Activated CD8-positive, alpha-beta memory T cell treated with anti-CD3 and anti-CD28 coated beads, Interleukin-2, amount 10 ng/mL, durations not matched to agents 7 days and 5 days (primary cell): ENCODE measurements at regions of chr5 and their contacts with region 1.

Region 1: DNA sequence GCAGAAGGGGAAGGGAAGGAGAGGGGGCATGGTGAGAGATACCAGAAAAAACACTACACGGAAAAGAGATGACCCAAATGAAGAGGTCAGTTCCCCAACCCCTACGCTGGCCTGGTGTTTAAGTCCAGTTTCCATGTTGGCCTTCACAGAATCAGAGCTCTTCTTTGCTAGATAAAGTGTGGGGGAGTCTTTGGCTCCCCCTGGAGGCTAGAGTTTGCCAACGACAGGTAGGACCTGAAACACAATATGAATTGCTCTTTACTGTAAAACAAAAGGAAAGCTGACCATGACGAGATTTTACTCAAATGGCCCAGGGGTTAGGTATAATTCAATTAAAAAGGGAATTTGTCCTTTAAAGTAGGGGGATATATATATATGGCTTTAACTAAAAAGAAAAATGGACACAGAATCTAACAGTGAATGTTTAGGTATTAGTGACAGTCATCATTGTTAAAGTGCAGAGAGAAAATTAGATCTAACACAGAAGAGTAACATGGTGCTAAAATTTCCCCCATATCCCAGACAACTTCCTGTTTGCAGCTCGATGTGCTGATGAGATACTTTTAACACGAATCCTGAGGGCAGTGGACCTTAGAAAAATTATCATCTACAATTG is 92.0 kb downstream of the SV2C start:
- DNase-seq: peak; percentile 76
- ATAC-seq: peak; percentile 52
- H3K4me3 Mint-ChIP-seq: peak overlapping the region; percentile 66
- H3K27ac Mint-ChIP-seq: peak overlapping the region; percentile 97
- H3K4me1 Mint-ChIP-seq: peaks cover 42% of the 10 kb centered on the region
- H3K27me3 Mint-ChIP-seq: no peaks in the 10 kb centered on the region

Region 2: GRCh38 chr5:75236322-75237316 is 938.5 kb before region 1 on chr5 and contains the start of gene ANKRD31:
- CTCF ChIA-PET with region 1: interaction called, 13 read pairs
- DNase-seq: peak; percentile 88
- ATAC-seq: peak; percentile 99
- H3K4me3 Mint-ChIP-seq: peak within 1 kb of the TSS; percentile 86
- H3K27ac Mint-ChIP-seq: peak within 1 kb of the TSS; percentile 94
- H3K4me1 Mint-ChIP-seq: peaks cover 19% of the 10 kb centered on the region
- H3K27me3 Mint-ChIP-seq: no peaks in the 10 kb centered on the region
- total RNA-seq, gene ANKRD31: 0.26 to 0.28 TPM

Region 3: DNA sequence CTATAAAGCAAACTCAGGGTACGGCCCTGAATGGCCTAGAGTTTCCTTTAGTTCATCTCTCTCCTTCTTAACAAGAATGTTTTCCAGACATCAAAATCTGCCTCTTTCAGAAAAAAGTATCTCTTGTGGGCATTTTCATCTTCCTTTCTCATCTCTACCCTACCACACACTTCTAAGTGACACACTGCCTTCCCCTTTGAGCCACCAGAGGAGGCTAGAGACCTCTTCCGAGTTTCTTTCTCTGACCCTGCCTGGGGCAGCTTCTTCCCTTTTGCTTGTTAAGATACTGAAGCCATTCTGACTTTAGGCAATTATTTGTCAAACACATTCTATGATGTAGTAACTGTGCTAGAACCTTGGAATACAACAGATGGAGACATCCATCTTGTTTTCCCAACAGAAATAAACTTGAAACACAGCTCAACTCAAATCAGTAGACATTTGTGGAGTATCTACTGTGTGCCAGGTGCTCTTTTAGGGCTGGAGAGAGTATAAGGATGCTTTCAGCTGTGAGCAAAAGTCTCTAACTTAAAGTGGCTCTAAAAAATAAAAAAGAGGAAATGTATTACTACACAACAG is 100.6 kb before region 1 on chr5:
- CTCF ChIA-PET with region 1: interaction called, 33 read pairs
- DNase-seq: peak; percentile 57
- ATAC-seq: peak; percentile 61
- H3K4me3 Mint-ChIP-seq: no peak overlapping the region
- H3K27ac Mint-ChIP-seq: no peak overlapping the region
- H3K4me1 Mint-ChIP-seq: peaks cover 7% of the 10 kb centered on the region
- H3K27me3 Mint-ChIP-seq: peaks cover 76% of the 10 kb centered on the region

Region 4: DNA sequence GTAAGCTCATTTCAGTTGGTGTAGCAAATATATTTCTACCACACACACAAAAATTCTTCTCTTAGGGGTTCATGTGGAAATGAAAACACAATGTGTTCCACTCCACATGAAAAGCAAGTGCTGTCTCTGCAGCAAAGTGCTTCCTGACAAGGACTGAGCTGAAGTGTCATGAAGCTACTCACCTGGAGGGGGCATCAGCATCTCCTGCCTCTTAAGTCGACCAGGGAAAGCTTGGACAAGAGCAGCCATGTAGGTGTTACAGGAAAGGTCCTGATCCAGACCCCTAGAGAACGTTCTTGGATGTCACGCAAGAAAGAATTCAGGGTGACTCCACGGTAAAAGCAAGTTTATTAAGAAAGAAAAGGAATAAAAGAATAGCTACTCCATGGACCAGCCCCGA is 29.2 kb before region 1 on chr5:
- CTCF ChIA-PET with region 1: interaction called, 17 read pairs
- DNase-seq: peak; percentile 45
- ATAC-seq: no peak
- H3K4me3 Mint-ChIP-seq: no peak overlapping the region
- H3K27ac Mint-ChIP-seq: no peak overlapping the region
- H3K4me1 Mint-ChIP-seq: no peaks in the 10 kb centered on the region
- H3K27me3 Mint-ChIP-seq: peaks cover 2% of the 10 kb centered on the region

Region 5: GRCh38 chr5:76187386-76187785 is 12.2 kb after region 1 on chr5:
- CTCF ChIA-PET with region 1: interaction called, 11 read pairs
- DNase-seq: no peak
- ATAC-seq: no peak
- H3K4me3 Mint-ChIP-seq: no peak overlapping the region
- H3K27ac Mint-ChIP-seq: no peak overlapping the region
- H3K4me1 Mint-ChIP-seq: peaks cover 6% of the 10 kb centered on the region
- H3K27me3 Mint-ChIP-seq: no peaks in the 10 kb centered on the region

Region 6: GRCh38 chr5:76209297-76209696 is 34.1 kb after region 1 on chr5:
- CTCF ChIA-PET with region 1: interaction called, 11 read pairs
- DNase-seq: no peak
- ATAC-seq: no peak
- H3K4me3 Mint-ChIP-seq: no peak overlapping the region
- H3K27ac Mint-ChIP-seq: no peak overlapping the region
- H3K4me1 Mint-ChIP-seq: no peaks in the 10 kb centered on the region
- H3K27me3 Mint-ChIP-seq: peaks cover 17% of the 10 kb centered on the region

Region 7: DNA sequence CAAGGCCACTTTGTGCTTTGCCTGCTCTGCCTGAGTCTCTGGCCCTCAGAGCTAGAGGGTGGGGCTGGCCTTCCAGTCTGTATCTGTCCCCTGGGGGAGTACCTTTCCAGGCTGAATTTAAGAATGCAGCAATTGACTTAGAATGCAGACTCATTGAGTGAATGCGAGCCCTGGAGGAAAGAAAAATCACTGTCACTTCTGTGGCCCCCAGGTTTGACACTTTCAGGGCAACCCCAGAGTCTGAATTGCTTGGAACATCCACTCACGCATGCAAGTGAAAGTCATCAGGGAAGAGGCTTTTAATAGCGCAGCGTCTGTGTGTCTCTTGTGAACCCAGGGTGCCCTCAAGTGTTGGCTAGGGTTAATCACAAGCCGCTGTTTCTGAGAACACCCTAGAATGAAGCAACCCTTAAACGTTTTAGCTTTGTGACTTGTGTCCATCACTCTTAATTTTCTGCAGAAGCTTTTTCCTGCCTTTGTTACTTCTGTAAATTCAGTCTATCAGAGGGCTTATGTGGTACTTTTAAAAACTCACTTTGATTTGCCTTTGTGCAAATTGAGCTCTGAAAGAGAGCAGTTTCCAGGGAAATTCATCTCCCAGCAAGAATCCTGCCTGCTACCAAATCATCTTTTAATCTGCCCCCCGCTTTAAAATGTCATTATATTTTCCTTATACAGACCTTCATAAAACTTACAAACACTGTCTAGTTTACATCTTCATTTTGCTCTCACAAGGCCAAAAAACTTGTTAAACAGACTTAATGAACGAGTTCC is 81.1 kb after region 1 on chr5:
- CTCF ChIA-PET with region 1: interaction called, 13 read pairs
- DNase-seq: peak; percentile 81
- ATAC-seq: peak; percentile 95
- H3K4me3 Mint-ChIP-seq: no peak overlapping the region
- H3K27ac Mint-ChIP-seq: peak overlapping the region; percentile 26
- H3K4me1 Mint-ChIP-seq: peaks cover 13% of the 10 kb centered on the region
- H3K27me3 Mint-ChIP-seq: peaks cover 22% of the 10 kb centered on the region